Right cardiac atrium (tissue), 5 donors: ENCODE measurements at regions of chr17 and their contacts with region 1.

Region 1: DNA sequence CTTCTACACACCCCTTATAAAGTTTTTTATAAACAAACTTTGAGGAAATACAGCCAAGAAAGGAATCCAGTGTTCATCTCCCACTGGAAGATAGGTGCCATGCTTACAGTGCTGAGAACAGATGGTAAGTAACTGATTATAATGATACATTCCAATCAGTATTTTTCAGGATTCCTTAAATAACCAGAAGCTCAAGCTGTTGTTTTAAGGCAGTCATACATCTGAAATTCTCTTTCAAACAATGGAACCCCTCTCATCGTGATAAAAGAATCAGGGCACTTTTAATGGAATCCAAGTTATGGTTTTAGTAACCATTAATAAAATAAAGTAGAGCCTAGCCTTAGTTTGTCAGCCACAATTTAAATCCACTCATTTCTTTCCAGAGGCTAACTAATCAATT is 56.1 kb upstream of the STAC2 start:
- DNase-seq: no peak
- ATAC-seq: no peak
- H3K4me3 ChIP-seq: no peak overlapping the region
- H3K27ac ChIP-seq: no peak overlapping the region
- H3K4me1 ChIP-seq: no peaks in the 10 kb centered on the region
- H3K27me3 ChIP-seq: no peaks in the 10 kb centered on the region

Region 2: GRCh38 chr17:39393736-39394135 is 111.9 kb after region 1 on chr17:
- intact Hi-C with region 1: loop called in 1 of 4 experiments (anchors 10 kb)
- DNase-seq: no peak
- ATAC-seq: no peak
- H3K4me3 ChIP-seq: no peak overlapping the region
- H3K27ac ChIP-seq: no peak overlapping the region
- H3K4me1 ChIP-seq: no peaks in the 10 kb centered on the region
- H3K27me3 ChIP-seq: no peaks in the 10 kb centered on the region